Natural killer cell (primary cell): ENCODE measurements at regions of chr15 and their contacts with region 1.

Region 1: DNA sequence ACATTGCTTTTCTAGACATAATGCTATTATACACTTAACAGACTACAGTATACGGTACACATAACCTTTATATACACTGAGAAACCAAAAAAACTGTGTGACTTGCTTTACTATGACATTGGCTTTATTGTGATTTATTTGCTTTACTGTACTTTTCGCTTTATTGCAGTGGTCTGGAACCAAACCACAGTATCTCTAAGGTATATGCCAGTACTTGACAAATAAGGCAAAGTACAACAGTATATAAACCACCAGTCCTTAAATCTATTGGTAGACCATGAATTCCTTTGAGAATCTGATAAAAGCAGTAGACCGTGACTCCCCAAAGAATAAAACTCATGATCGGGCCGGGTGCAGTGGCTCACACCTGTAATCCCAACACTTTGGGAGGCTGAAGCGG is 50.3 kb downstream of the HERC1 start:
- DNase-seq: no peak
- ATAC-seq: no peak
- H3K4me3 ChIP-seq: no peak overlapping the region
- H3K4me3 Mint-ChIP-seq: no peak overlapping the region
- H3K27ac ChIP-seq: no peak overlapping the region
- H3K27ac Mint-ChIP-seq: no peak overlapping the region
- H3K4me1 ChIP-seq: no peaks in the 10 kb centered on the region
- H3K4me1 Mint-ChIP-seq: peaks cover 48 to 53% of the 10 kb centered on the region in 2 donors
- H3K27me3 ChIP-seq: no peaks in the 10 kb centered on the region
- H3K27me3 Mint-ChIP-seq: no peaks in the 10 kb centered on the region
- CTCF ChIP-seq: no peak

Region 2: DNA sequence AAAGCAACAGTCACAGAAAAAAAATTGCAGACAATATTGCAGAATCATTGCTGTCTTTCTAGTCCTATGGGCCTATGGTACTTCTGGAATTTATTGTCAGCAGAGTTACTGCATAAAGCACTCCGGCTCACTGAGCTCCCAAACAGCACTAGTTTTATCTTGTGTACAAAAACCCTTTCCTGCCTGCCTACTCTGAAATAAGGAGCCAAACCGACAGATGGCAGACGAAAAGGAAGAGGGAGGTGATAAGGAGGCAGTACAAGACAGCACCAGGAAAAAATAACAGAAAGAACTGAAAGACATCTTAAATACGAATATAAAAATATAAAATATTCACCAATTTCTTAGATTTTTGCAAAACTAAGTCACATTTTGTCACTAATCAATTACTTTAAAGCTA is 34.8 kb after region 1 on chr15:
- intact Hi-C with region 1: loop called (anchors 5 kb)
- DNase-seq: peak in 1 of 2 donors; percentile 44
- ATAC-seq: peak in 1 of 3 donors; percentile 42
- H3K4me3 ChIP-seq: no peak overlapping the region
- H3K4me3 Mint-ChIP-seq: no peak overlapping the region
- H3K27ac ChIP-seq: no peak overlapping the region
- H3K27ac Mint-ChIP-seq: peak overlapping the region in 1 of 2 donors; percentile 63
- H3K4me1 ChIP-seq: peaks cover 21% of the 10 kb centered on the region
- H3K4me1 Mint-ChIP-seq: peaks cover 71 to 81% of the 10 kb centered on the region in 2 donors
- H3K27me3 ChIP-seq: no peaks in the 10 kb centered on the region
- H3K27me3 Mint-ChIP-seq: no peaks in the 10 kb centered on the region
- CTCF ChIP-seq: no peak